ENCODE measurements at regions of chr5 and their contacts with region 1.

Region 1: GRCh38 chr5:179678223-179679013 is 2.4 kb downstream of the CBY3 start:
- DNase-seq: peak; percentile 97
- ATAC-seq: peak; percentile 90
- H3K4me3 Mint-ChIP-seq: peak overlapping the region; percentile 91
- H3K27ac Mint-ChIP-seq: peak overlapping the region; percentile 97
- H3K4me1 Mint-ChIP-seq: peaks cover 23% of the 10 kb centered on the region
- H3K27me3 Mint-ChIP-seq: no peaks in the 10 kb centered on the region

Region 2: GRCh38 chr5:178859625-178860531 is 818.5 kb before region 1 on chr5 and contains the start of gene ZNF354B:
- CTCF ChIA-PET with region 1: no interaction called
- POLR2A ChIA-PET with region 1: no interaction called
- intact Hi-C with region 1: loop called in 1 of 2 experiments (anchors 1 kb)
- DNase-seq: peak; percentile 93
- ATAC-seq: peak; percentile 100
- H3K4me3 Mint-ChIP-seq: peak within 1 kb of the TSS; percentile 79
- H3K27ac Mint-ChIP-seq: peak within 1 kb of the TSS; percentile 89
- H3K4me1 Mint-ChIP-seq: peaks cover 24% of the 10 kb centered on the region
- H3K27me3 Mint-ChIP-seq: no peaks in the 10 kb centered on the region
- total RNA-seq, gene ZNF354B: 10.8 to 11.9 TPM

Region 3: DNA sequence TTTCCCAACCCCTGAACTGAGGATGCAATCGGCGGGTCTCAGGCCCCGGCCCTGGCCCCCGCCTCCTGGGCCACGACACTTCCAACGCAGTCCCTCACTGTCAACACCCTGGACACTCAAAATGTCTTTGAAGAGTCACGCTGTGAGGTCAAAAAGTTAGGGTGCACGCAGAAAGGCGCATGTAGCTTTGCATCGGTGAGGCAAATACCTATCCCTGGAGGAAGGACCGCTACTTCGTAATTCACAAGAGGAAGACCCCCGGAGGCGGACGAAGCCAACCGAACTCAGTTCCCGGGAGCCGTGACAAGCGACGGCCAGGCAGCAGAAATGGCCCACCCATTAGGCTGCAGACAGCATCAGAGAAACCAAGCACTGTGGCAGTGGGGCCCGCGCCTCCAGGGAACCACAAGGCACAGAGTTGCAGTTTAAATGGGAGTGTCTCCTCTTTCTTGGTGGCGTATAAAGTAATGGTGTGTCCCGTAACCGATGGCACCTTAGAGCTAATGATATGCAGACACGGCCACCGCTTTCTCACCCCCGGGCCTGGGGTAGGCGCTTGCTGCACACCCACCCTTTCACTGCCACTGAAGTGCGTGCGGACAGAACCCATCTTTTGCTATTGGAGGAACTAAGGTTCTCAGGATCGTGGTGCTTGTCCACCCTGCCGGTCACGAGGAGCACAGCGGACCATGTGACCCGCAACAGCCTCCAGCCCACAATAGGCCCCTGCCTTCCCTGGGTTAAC is 342.1 kb before region 1 on chr5:
- CTCF ChIA-PET with region 1: no interaction called
- POLR2A ChIA-PET with region 1: no interaction called
- intact Hi-C with region 1: no loop called
- DNase-seq: no peak
- ATAC-seq: no peak
- H3K4me3 Mint-ChIP-seq: no peak overlapping the region
- H3K27ac Mint-ChIP-seq: no peak overlapping the region
- H3K4me1 Mint-ChIP-seq: no peaks in the 10 kb centered on the region
- H3K27me3 Mint-ChIP-seq: peaks cover 14% of the 10 kb centered on the region

Region 4: GRCh38 chr5:179559284-179560252 is 118.8 kb before region 1 on chr5:
- CTCF ChIA-PET with region 1: no interaction called
- POLR2A ChIA-PET with region 1: interaction called, 3 read pairs
- intact Hi-C with region 1: loop called in 1 of 2 experiments (anchors 1 kb)
- DNase-seq: peak; percentile 97
- ATAC-seq: peak; percentile 100
- H3K4me3 Mint-ChIP-seq: peak overlapping the region; percentile 82
- H3K27ac Mint-ChIP-seq: peak overlapping the region; percentile 80
- H3K4me1 Mint-ChIP-seq: peaks cover 17% of the 10 kb centered on the region
- H3K27me3 Mint-ChIP-seq: no peaks in the 10 kb centered on the region

Region 5: GRCh38 chr5:179732417-179732917 is 54.0 kb after region 1 on chr5 and contains the start of gene MAML1:
- CTCF ChIA-PET with region 1: no interaction called
- POLR2A ChIA-PET with region 1: interaction called, 7 read pairs
- intact Hi-C with region 1: loop called in 1 of 2 experiments (anchors 1 kb)
- DNase-seq: peak; percentile 99
- ATAC-seq: peak; percentile 95
- H3K4me3 Mint-ChIP-seq: peak within 1 kb of the TSS; percentile 92
- H3K27ac Mint-ChIP-seq: peak within 1 kb of the TSS; percentile 94
- H3K4me1 Mint-ChIP-seq: peaks cover 43% of the 10 kb centered on the region
- H3K27me3 Mint-ChIP-seq: no peaks in the 10 kb centered on the region
- total RNA-seq, gene MAML1: 25.4 to 32.6 TPM

Region 6: DNA sequence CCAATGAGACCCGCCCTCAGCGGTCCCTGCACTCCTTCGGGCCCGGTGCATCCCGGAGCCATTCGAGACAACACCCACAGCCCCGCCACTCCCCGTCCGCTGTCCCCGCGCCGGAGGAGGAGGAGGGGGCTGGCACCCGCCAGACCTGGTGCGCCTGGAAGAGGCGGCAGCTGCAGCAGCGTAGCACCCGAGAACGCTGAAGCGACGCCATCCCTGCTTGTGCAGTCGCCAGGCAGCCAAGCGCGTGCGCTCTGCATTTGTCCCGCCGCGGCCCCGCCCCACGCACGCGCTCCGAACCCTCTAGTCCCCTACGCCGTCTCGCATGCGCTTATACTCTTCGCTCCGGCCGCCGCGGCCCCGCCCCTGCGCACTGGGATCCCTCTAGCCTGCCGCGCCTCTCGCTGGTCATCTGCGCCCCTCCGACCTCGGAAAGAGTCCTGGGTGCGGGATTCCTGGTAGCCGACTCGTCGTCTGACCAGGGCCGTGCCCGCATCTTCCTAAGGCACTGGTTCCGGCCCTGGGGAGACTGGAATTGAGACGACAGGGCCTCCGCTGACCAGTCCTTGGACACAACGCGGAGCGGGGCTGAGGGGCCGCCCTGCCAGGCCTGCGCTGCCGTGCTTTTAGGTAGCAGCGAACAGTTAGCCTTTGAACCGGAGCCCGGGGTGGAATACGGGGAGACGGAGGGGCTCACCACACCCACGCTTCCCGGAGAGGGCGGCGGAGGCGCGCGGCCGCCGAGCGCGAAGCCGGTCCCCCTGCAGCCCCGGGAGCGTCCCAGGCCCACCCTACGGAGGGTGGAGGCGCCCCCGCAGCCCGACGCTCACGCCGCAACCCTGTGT is 180.4 kb after region 1 on chr5 and contains the start of gene MRNIP:
- CTCF ChIA-PET with region 1: no interaction called
- POLR2A ChIA-PET with region 1: no interaction called
- intact Hi-C with region 1: loop called in 1 of 2 experiments (anchors 1 kb)
- DNase-seq: peak; percentile 95
- ATAC-seq: peak; percentile 98
- H3K4me3 Mint-ChIP-seq: peak within 1 kb of the TSS; percentile 84
- H3K27ac Mint-ChIP-seq: peak within 1 kb of the TSS; percentile 85
- H3K4me1 Mint-ChIP-seq: peaks cover 6% of the 10 kb centered on the region
- H3K27me3 Mint-ChIP-seq: no peaks in the 10 kb centered on the region
- total RNA-seq, gene MRNIP: 19.4 to 19.7 TPM

Region 7: DNA sequence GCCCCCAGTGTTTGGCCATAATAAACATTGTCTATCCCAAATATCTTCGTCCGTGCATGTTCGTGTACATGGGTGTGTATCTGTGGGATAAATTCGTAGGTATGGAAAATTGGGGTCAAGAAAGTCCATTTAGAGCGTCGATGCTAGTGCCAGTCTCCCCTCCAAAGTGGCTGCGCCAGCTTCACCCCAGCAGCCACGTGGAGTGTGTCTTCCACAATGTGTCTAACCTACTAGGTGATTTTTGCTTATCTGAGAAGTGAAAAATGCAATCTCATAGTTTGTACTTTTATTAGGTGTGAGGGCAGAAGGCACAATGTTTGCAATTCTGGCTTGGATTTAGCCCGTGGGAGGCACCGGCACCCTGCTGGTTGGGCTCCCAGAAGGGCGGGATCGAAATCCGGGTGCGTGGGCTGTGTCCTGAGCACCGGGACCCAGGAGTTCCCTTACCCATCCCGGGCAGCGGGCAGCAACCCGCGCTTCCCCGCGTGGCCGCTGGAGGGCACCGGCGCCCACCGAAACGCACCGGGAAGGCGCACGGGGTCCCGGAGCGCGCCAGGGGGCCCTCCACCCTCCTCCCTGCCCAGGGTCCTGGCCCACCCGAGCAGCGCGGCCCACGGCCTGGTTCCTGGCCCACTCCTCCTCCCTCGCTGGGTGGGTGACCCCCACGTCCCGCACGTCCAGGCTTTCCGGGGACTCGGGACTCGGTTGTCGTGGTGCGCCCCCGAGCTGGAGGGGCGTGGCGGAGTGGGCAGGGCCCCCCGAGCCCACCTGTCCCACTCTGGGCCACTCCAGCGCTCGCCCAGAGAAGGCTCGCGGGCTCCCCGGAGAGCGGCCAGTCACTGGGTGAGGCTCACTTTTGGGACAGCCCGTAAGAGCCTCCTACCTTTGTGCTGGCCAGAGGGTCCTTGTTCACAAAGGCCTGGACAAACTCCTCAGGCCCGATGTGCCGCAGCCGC is 448.6 kb after region 1 on chr5:
- CTCF ChIA-PET with region 1: no interaction called
- POLR2A ChIA-PET with region 1: no interaction called
- intact Hi-C with region 1: no loop called
- DNase-seq: peak; percentile 66
- ATAC-seq: peak; percentile 85
- H3K4me3 Mint-ChIP-seq: no peak overlapping the region
- H3K27ac Mint-ChIP-seq: no peak overlapping the region
- H3K4me1 Mint-ChIP-seq: no peaks in the 10 kb centered on the region
- H3K27me3 Mint-ChIP-seq: peaks cover 14% of the 10 kb centered on the region

Measured in activated CD4-positive, alpha-beta T cell treated with anti-CD3 and anti-CD28 coated beads for 36 hours (primary cell).